ENCODE measurements at regions of chr6 and their contacts with region 1.

Region 1: DNA sequence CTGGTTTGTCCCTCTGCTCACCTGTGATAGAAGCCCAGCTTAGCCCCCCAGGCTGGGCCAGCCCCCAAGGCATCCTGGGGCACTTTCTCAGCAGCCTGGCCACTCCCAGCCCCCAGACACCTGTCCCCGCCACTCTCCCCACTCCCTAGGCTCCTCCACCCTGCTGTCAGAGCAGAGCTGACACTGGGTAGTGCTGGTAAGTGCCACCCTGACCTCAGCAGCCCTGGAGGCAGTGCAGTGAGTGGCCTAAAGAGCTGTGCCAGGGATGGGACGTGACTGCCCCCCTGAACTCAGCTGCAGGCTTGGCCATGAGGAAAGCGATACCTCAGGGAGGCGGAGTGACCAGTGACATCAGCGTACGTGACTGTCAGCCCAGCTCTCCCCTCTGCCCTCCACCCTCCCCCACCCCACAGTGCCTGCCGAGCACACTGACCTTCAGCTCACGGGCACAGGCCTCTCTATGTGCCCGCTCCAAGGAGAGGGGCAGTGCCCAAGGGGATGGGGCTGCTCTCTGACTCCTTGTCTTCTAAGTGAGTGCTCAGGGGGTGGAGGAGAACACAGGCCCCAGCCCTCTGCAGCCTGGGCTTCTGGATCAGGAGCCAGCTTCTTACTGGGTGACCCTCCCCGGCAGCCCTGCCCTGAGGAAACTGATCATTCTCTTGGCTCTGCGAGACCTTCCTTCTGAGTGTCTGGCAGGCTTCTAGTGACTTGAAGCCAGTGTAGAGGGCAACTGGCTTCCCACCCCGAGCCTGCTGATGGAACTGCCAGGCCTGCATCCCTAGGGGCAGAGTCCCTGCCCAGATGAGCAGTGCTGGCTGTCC is 172.7 kb downstream of the MRPL14 start:
- DNase-seq: no peak
- H3K27ac ChIP-seq: no peak overlapping the region
- CTCF ChIP-seq: no peak

Region 2: DNA sequence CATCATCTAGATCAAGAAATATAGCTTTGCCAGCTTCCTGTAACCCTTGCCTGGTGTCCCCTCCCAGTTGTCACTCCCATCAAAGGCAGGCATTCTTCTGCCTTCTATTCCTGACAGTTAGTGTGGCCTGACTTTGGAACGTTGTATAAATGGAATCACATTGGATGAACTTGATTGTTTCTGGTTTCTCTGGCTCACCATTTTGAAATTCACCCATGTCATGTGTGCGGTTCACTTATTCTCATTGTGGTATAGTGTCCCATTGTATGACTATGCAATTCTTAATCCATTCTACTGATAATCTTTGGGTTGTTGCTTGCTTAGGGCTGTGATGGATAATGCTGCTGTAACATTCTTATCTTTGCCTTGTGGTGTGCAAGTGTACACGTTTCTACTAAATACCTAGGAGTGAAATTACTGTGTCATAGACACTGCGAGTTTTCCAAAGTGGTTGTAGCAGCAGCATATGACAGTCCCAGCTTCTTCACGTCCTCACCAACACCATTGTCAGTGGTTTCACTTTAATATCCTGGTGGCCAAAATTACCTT is 111.3 kb before region 1 on chr6:
- CTCF ChIA-PET with region 1: interaction called, 10 read pairs
- POLR2A ChIA-PET with region 1: no interaction called
- DNase-seq: no peak
- H3K27ac ChIP-seq: no peak overlapping the region
- CTCF ChIP-seq: no peak

Region 3: GRCh38 chr6:43865932-43866645 is 88.4 kb before region 1 on chr6:
- CTCF ChIA-PET with region 1: no interaction called
- POLR2A ChIA-PET with region 1: no interaction called
- DNase-seq: no peak
- H3K27ac ChIP-seq: no peak overlapping the region
- CTCF ChIP-seq: no peak

Measured in RWPE1 (cell line).